HepG2 (cell line): ENCODE measurements at regions of chr4 and their contacts with region 1.

Region 1: GRCh38 chr4:8917868-8918783 is 46.5 kb upstream of the HMX1 start:
- DNase-seq: peak; percentile 23
- ATAC-seq: peak; percentile 88
- H3K4me3 ChIP-seq: no peak overlapping the region
- H3K27ac ChIP-seq: no peak overlapping the region
- H3K4me1 ChIP-seq: no peaks in the 10 kb centered on the region
- H3K27me3 ChIP-seq: peaks cover 7 to 33% of the 10 kb centered on the region in 2 experiments; a peak in 4 of 5 replicates
- CTCF ChIP-seq: peak; percentile 93
- EP300 ChIP-seq: no peak
- POLR2A ChIP-seq: no peak
- RAD21 ChIP-seq: peak; percentile 82

Region 2: DNA sequence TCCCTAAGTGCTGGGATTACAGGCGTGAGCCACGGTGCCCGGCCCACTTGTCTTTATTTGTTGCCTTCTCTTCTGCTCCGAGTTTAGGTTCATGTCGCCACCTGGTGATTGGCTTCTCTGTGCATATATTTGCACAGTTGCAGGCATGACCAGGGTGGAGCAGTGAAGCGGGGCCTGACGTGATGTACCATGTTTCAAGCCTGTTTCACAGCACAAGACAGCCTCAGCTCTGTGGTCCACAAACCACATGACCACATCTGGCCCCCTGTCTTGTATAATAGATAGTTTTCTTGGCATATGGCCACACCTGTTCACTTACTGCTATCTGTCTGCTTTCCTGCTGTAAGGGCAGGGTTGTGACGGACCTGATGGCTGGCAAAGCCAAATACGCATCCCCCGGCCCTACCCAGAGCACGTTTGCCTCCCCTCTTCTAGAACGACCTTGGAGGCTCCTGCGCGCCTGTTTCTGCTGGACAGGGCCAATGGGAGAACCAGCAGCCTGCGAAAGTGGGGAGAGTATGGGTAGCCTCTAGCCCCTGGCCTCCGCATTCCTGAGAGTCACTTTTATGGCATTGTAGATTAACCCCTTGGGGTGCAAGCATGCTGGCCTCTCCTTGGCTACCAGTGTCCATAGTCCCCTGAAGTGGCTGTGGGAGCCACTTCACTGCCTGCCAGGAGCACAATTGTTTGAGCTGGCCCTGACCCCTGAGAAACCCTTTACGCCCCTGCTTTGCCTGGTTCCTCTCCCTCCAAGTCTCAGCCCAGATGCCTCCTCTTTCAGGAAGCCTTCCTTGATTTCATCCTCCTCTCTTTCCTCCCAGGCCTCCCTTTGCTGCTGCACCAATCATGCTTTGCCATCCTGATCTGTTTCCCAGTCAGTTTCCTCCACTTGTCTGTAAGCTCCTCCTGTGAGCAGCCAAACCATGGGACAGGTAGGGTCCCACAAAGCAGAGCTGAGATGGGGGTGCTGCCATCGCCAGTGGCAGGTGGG is 725.1 kb before region 1 on chr4:
- CTCF ChIA-PET with region 1: no interaction called
- POLR2A ChIA-PET with region 1: no interaction called
- in situ Hi-C with region 1: no loop called
- intact Hi-C with region 1: no loop called
- DNase-seq: peak; percentile 73
- ATAC-seq: peak; percentile 75
- H3K4me3 ChIP-seq: no peak overlapping the region
- H3K27ac ChIP-seq: no peak overlapping the region
- H3K4me1 ChIP-seq: peaks cover 73% of the 10 kb centered on the region
- H3K27me3 ChIP-seq: peaks cover 7 to 60% of the 10 kb centered on the region in 2 experiments; a peak in 3 of 5 replicates
- CTCF ChIP-seq: peak; percentile 85
- EP300 ChIP-seq: no peak
- POLR2A ChIP-seq: no peak
- RAD21 ChIP-seq: no peak

Region 3: DNA sequence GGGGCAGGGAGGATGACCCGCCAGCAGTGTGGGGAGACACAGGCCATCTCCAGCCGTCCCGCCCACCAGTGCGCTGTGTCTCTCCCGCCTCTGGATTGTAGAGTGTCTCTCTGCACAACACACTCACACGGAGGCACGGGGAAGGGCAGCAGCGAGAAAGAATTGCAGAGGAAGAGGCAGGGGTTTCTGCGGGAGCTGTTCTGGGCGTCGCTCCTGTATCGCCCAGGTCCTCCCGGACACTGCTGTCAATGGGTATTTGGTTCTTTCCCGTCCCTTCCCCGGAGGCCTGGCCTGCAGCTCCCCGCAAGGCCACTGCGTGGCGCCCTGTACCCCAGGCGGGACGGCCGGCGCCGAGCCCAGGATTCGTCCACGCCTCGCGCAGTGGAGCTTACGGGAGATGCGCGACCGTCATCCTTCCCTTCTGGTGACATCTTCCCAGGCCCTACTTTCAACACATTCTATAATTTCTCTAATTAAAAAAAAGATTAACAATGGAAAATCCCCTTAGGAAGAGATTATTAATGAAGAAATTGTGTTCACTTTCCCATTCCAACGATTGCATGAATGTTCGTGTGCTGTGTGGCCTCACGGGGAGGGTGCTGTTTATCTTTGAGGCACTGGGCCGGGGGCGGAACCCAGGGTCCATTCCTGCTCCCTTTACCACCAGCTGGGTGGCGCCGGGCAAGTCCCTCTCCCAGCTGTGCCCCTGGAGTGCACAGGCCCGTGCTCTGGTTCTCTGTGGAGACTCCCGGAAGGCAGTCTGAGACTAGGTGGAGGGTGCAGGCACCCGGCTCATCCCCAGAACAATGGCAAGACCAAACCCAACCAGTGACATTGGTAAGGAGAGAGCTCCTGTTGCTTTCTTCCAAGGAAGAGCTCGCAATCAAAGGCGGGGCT is 229.8 kb before region 1 on chr4:
- CTCF ChIA-PET with region 1: no interaction called
- POLR2A ChIA-PET with region 1: no interaction called
- in situ Hi-C with region 1: loop called (anchors 5 kb)
- intact Hi-C with region 1: loop called (anchors 10 kb)
- DNase-seq: no peak
- ATAC-seq: peak; percentile 89
- H3K4me3 ChIP-seq: no peak overlapping the region
- H3K27ac ChIP-seq: no peak overlapping the region
- H3K4me1 ChIP-seq: no peaks in the 10 kb centered on the region
- H3K27me3 ChIP-seq: peaks cover 5 to 36% of the 10 kb centered on the region in 2 experiments; a peak in 3 of 5 replicates
- CTCF ChIP-seq: peak; percentile 74
- EP300 ChIP-seq: no peak
- POLR2A ChIP-seq: no peak
- RAD21 ChIP-seq: no peak

Region 4: DNA sequence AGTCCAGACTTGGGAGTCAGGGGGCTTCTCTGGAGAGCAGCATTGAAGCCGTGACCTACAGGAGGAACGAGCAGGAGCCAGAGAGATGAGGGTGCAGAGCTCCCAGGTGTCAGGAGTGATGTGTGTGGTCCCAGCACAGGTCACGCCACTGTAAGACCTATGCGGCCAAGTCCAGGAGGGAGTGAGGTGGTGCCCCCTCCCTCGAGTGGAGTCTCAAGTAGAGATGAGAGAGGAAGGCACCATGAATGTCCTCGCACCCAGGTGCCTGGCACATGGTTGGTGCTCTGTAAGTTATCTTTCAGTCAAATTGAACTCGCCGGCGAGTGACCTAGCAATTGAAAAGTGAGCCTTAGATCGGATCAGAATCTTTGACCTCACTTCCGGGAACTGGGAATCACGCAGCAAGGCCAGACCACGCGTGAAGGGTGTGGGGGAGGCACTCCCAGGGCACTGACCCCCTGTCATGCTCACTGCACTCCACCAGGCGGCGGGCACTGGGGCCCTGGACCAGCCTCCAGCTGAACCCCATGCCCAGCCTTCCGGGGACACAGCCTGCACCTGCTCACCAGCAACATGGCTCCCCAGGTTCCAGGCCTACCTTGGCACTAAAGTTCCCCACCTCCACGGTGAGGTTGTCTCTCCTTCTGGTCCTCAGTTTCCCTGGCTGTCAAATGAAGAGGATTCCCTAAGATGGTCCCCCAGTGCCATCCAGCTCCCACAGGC is 173.9 kb before region 1 on chr4:
- CTCF ChIA-PET with region 1: no interaction called
- POLR2A ChIA-PET with region 1: no interaction called
- in situ Hi-C with region 1: no loop called
- intact Hi-C with region 1: no loop called
- DNase-seq: no peak
- ATAC-seq: peak; percentile 58
- H3K4me3 ChIP-seq: no peak overlapping the region
- H3K27ac ChIP-seq: no peak overlapping the region
- H3K4me1 ChIP-seq: no peaks in the 10 kb centered on the region
- H3K27me3 ChIP-seq: peaks cover 0 to 18% of the 10 kb centered on the region in 2 experiments; a peak in 3 of 5 replicates
- CTCF ChIP-seq: no peak
- EP300 ChIP-seq: no peak
- POLR2A ChIP-seq: no peak
- RAD21 ChIP-seq: no peak

Region 5: DNA sequence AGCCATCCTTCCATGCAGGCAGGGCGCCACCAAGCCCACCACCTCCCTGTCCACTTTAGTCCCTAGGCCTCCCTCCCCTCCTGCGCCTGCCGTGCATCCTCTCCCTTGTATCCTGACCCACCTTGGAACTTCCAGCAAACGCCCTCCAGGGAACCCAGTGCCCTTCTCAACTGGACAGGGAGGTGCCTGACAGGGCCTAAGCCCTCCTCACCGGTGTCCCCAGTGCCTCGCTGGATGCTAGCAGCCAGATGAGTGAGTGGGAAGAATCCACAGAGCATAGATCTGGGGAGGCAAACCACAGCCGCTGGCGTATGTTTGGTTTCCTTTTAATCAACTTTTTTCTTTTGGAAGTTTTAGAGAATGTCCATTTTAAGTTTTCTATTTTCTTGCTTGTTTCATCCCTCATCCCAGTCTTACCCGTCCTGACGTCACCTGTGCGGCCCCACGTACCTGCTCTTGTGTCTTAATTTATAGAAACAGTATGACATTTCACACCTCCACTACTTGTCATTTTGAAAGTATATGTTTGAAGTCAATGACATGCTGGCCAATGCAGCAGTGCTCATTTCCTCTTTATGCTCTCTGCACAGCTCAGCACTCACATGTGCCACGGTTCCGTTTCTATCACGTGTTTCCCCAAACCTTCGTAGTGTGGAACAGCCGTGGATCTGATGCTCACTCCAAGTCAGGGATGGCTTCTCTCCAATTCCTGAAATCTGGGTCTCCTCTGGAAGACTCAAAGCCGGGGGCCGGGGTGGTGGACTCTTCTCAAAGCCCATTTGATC is 43.0 kb before region 1 on chr4:
- CTCF ChIA-PET with region 1: no interaction called
- POLR2A ChIA-PET with region 1: no interaction called
- in situ Hi-C with region 1: no loop called
- intact Hi-C with region 1: loop called (anchors 2 kb)
- DNase-seq: no peak
- ATAC-seq: no peak
- H3K4me3 ChIP-seq: no peak overlapping the region
- H3K27ac ChIP-seq: no peak overlapping the region
- H3K4me1 ChIP-seq: no peaks in the 10 kb centered on the region
- H3K27me3 ChIP-seq: peaks cover 8 to 67% of the 10 kb centered on the region in 2 experiments
- CTCF ChIP-seq: no peak
- EP300 ChIP-seq: no peak
- POLR2A ChIP-seq: no peak
- RAD21 ChIP-seq: no peak

Region 6: DNA sequence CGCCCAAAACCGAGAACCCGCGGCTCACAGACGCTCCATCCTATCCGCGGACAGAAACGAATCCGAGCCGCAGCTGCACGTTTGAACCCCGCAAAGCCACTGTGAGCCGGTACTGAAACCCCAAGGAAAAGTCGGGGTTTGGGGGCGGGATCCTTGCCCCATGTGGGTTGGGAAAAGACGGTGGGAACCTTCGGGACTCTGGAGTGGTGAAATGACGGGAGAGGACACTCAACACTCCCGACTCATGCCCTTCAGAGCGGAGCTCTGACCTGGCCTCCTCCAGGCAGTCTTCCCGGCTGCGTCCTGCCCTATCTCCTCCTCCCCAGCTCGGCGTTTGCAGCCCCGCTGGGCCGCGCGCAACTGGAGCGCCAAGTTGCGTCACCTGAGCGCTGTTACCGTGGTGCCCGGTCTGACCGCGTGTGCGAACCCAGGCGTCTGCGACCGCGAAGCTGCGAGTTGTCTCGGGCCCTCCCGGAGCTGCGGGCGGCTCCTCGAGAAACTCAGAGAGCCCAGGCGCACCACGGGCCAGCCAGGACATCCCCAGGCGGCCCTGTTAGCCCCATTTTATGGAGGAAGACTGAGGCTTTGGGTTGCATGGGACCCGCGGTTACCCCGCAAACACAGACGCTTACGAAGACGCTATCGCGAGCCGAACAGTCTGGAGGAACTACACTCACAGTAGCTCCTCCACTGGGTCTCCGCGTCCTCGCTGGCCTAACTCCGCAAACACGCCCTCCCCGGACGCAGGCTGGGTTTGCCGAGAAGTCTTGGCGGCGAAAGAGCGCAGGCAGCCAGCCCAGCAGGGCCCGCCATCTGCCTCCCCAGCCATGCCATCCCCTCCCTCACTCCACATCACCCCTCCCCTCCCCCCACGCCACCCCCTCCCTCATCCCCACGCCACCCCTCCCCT is 26.2 kb before region 1 on chr4:
- CTCF ChIA-PET with region 1: no interaction called
- POLR2A ChIA-PET with region 1: no interaction called
- in situ Hi-C with region 1: no loop called
- intact Hi-C with region 1: no loop called
- DNase-seq: no peak
- ATAC-seq: no peak
- H3K4me3 ChIP-seq: no peak overlapping the region
- H3K27ac ChIP-seq: no peak overlapping the region
- H3K4me1 ChIP-seq: peaks cover 5% of the 10 kb centered on the region; the same call in 1 of the 2 replicates
- H3K27me3 ChIP-seq: peaks cover 12 to 74% of the 10 kb centered on the region in 2 experiments; a peak in 4 of 5 replicates
- CTCF ChIP-seq: no peak
- EP300 ChIP-seq: no peak
- POLR2A ChIP-seq: no peak
- RAD21 ChIP-seq: no peak